GM12878 (cell line): ENCODE measurements at regions of chr20 and their contacts with region 1.

Region 1: GRCh38 chr20:44800398-44801046 is 9.8 kb downstream of the RIMS4 start:
- DNase-seq: no peak
- ATAC-seq: no peak
- H3K4me3 ChIP-seq: no peak overlapping the region
- H3K27ac ChIP-seq: no peak overlapping the region
- H3K4me1 ChIP-seq: no peaks in the 10 kb centered on the region
- H3K27me3 ChIP-seq: no peaks in the 10 kb centered on the region; a peak in 1 of 4 replicates
- CTCF ChIP-seq: peak in 2 of 3 experiments; percentile 26 to 27; a peak in 2 of 6 replicates
- EP300 ChIP-seq: no peak
- POLR2A ChIP-seq: no peak
- RAD21 ChIP-seq: 0 out of 2 replicates have a peak, but pooled peaks have one; percentile 14

Region 2: GRCh38 chr20:44866703-44867335 is 66.3 kb after region 1 on chr20:
- CTCF ChIA-PET with region 1: interaction called, 11 read pairs
- POLR2A ChIA-PET with region 1: no interaction called
- RAD21 ChIA-PET with region 1: no interaction called
- SMC1A ChIA-PET with region 1: interaction called, 3 read pairs
- in situ Hi-C with region 1: no loop called
- intact Hi-C with region 1: loop called (anchors 5 kb)
- DNase-seq: no peak
- ATAC-seq: peak; percentile 29; the same call in 2 of the 3 replicates
- H3K4me3 ChIP-seq: no peak overlapping the region
- H3K27ac ChIP-seq: no peak overlapping the region
- H3K4me1 ChIP-seq: peaks cover 4% of the 10 kb centered on the region
- H3K27me3 ChIP-seq: peaks cover 0 to 3% of the 10 kb centered on the region in 2 experiments; a peak in 1 of 4 replicates
- CTCF ChIP-seq: no peak
- EP300 ChIP-seq: no peak
- POLR2A ChIP-seq: no peak
- RAD21 ChIP-seq: no peak